ENCODE measurements at regions of chr11 and their contacts with region 1.

Region 1: GRCh38 chr11:45079943-45080719 is 66.3 kb upstream of the PRDM11 start:
- DNase-seq: peak in 1 of 3 donors; percentile 71
- ATAC-seq: peak in 1 of 2 donors; percentile 49
- H3K4me3 ChIP-seq: no peak overlapping the region
- H3K27ac ChIP-seq: no peak overlapping the region
- H3K4me1 ChIP-seq: no peaks in the 10 kb centered on the region
- H3K27me3 ChIP-seq: no peaks in the 10 kb centered on the region

Region 2: GRCh38 chr11:44936525-44936924 is 143.6 kb before region 1 on chr11:
- intact Hi-C with region 1: no loop called
- DNase-seq: peak; percentile 78 to 94 (median 89)
- ATAC-seq: peak; percentile 43 to 53
- H3K4me3 ChIP-seq: no peak overlapping the region
- H3K27ac ChIP-seq: no peak overlapping the region
- H3K4me1 ChIP-seq: peaks cover 12% of the 10 kb centered on the region
- H3K27me3 ChIP-seq: no peaks in the 10 kb centered on the region

Region 3: GRCh38 chr11:44989831-44990566 is 90.1 kb before region 1 on chr11:
- intact Hi-C with region 1: loop called in 2 of 4 experiments (anchors 5 to 10 kb)
- DNase-seq: peak; percentile 87 to 95 (median 94)
- ATAC-seq: peak; percentile 91 to 93
- H3K4me3 ChIP-seq: no peak overlapping the region
- H3K27ac ChIP-seq: peak overlapping the region; percentile 73
- H3K4me1 ChIP-seq: peaks cover 9% of the 10 kb centered on the region
- H3K27me3 ChIP-seq: no peaks in the 10 kb centered on the region

Region 4: GRCh38 chr11:45025716-45026492 is 54.2 kb before region 1 on chr11:
- intact Hi-C with region 1: loop called in 1 of 4 experiments (anchors 10 kb)
- DNase-seq: peak; percentile 38 to 81 (median 75)
- ATAC-seq: peak; percentile 52 to 73
- H3K4me3 ChIP-seq: no peak overlapping the region
- H3K27ac ChIP-seq: peak overlapping the region; percentile 9
- H3K4me1 ChIP-seq: peaks cover 13% of the 10 kb centered on the region
- H3K27me3 ChIP-seq: no peaks in the 10 kb centered on the region

Measured in right cardiac atrium (tissue), 5 donors.